ENCODE measurements at regions of chr12 and their contacts with region 1.

Region 1: GRCh38 chr12:94615284-94616181 is 34.8 kb downstream of the TMCC3 start:
- DNase-seq: peak; percentile 93
- H3K4me3 ChIP-seq: peak overlapping the region; percentile 16 to 44 (median 43)
- H3K27ac ChIP-seq: peak overlapping the region; percentile 95
- H3K4me1 ChIP-seq: peaks cover 61% of the 10 kb centered on the region
- H3K27me3 ChIP-seq: no peaks in the 10 kb centered on the region
- CTCF ChIP-seq: no peak

Region 2: GRCh38 chr12:93441617-93442410 is 1173.7 kb before region 1 on chr12 and contains the start of gene UBE2N:
- CTCF ChIA-PET with region 1: no interaction called
- dilution Hi-C with region 1: no loop called
- in situ Hi-C with region 1: no loop called
- intact Hi-C with region 1: loop called (anchors 5 kb)
- DNase-seq: peak; percentile 96
- H3K4me3 ChIP-seq: peak within 1 kb of the TSS; percentile 72 to 97 (median 93)
- H3K27ac ChIP-seq: peak within 1 kb of the TSS; percentile 95
- H3K4me1 ChIP-seq: peaks cover 32% of the 10 kb centered on the region
- H3K27me3 ChIP-seq: no peaks in the 10 kb centered on the region
- CTCF ChIP-seq: no peak
- total RNA-seq, gene UBE2N: 65.5 to 137 TPM

Region 3: DNA sequence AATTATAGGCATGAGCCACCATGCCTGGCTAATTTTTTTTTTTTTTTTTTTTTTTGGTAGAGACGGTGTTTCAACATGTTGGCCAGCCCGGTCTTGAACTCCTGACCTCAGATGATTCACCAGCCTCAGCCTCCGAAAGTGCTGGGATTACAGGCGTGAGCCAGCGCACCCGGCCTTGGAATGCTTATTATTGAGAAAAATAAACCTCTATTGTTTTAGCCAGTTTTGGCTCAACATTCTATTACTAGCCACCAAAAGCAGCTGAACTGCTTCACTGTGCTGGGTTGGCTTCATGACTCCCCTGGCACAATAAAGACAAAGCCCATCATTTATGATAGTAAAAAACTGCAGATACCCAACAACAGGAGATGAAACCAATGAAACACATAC is 62.4 kb before region 1 on chr12:
- CTCF ChIA-PET with region 1: no interaction called
- dilution Hi-C with region 1: loop called (anchors 5 kb)
- in situ Hi-C with region 1: no loop called
- intact Hi-C with region 1: no loop called
- DNase-seq: peak; percentile 95
- H3K4me3 ChIP-seq: no peak overlapping the region
- H3K27ac ChIP-seq: peak overlapping the region; percentile 97
- H3K4me1 ChIP-seq: peaks cover 24% of the 10 kb centered on the region
- H3K27me3 ChIP-seq: no peaks in the 10 kb centered on the region
- CTCF ChIP-seq: no peak

Region 4: GRCh38 chr12:94560431-94561221 is 54.9 kb before region 1 on chr12:
- CTCF ChIA-PET with region 1: no interaction called
- dilution Hi-C with region 1: no loop called
- in situ Hi-C with region 1: no loop called
- intact Hi-C with region 1: loop called (anchors 2 kb)
- DNase-seq: peak; percentile 98
- H3K4me3 ChIP-seq: peak overlapping the region in 2 of 3 experiments; percentile 20 to 35
- H3K27ac ChIP-seq: peak overlapping the region; percentile 95
- H3K4me1 ChIP-seq: peaks cover 34% of the 10 kb centered on the region
- H3K27me3 ChIP-seq: no peaks in the 10 kb centered on the region
- CTCF ChIP-seq: no peak

Region 5: DNA sequence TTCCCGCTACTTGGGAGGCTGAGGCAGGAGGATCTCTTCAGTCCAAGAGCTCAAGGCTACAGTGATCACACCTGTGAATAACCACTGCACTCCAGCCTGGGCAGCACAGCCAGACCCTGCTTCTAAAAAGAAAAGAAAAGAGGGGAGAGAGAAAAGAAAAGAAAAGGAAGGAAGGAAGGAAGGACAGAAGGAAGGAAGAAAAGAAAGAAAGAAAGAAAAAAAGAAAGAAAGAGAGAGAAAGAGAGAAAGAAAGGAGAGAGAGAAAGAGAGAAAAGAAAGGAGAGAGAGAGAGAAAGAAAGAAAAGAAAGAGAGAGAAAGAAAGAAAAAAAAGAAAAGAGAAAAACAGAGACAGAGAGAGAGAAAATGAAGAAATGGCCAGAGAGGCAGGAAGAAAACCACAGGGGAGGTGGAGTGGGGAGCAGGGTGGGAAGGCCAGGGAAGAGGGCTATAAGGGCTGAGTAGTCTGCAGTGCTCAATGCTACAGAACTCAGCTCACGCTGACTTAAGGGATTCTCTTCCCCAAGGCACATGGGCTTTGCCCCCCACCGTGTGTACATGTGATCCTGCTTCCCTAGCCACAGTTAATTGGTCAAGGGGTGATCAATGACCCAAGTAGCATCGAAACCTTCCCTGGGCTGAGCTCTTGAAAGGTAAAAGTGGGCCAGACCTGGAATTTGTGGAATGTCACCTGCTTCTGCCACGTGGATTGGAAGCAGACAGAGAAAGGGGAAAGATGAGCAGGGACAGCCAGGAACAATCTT is 125.2 kb after region 1 on chr12:
- CTCF ChIA-PET with region 1: no interaction called
- dilution Hi-C with region 1: no loop called
- in situ Hi-C with region 1: no loop called
- intact Hi-C with region 1: no loop called
- DNase-seq: no peak
- H3K4me3 ChIP-seq: no peak overlapping the region
- H3K27ac ChIP-seq: no peak overlapping the region
- H3K4me1 ChIP-seq: peaks cover 7% of the 10 kb centered on the region
- H3K27me3 ChIP-seq: no peaks in the 10 kb centered on the region
- CTCF ChIP-seq: no peak

Region 6: DNA sequence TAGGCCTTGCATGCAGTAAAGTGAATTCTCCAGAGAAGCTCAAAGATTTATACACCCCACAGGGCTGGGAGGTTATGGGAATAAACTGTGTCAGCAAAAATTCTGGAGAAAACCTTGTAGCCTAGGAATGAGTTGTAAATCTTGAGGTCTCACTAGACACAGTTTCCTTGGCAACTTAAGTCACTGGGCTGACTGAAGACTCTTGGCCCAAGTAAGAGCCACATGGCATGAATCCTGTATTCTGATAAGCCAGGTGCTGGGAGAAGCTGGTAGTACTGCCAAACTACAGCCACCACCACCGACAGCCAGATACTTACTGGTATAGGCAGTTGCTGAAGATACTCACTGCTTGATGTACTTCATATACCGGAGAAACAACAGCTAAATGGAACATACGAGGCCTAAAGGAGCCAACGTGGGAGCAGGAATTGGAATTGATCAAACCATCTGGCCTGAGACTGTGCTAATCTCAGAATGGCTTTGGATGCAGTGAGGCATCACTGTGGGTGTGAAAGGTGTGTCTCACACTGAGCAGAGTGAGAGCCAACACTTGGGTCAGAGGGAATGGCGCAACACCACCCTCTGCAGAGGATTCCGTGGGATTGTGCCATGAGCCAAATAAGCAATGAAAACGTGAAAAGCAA is 137.6 kb after region 1 on chr12:
- CTCF ChIA-PET with region 1: no interaction called
- dilution Hi-C with region 1: no loop called
- in situ Hi-C with region 1: loop called in 1 of 2 experiments (anchors 10 kb)
- intact Hi-C with region 1: no loop called
- DNase-seq: peak; percentile 70
- H3K4me3 ChIP-seq: no peak overlapping the region
- H3K27ac ChIP-seq: no peak overlapping the region
- H3K4me1 ChIP-seq: no peaks in the 10 kb centered on the region
- H3K27me3 ChIP-seq: no peaks in the 10 kb centered on the region
- CTCF ChIP-seq: peak; percentile 7 to 44

Region 7: DNA sequence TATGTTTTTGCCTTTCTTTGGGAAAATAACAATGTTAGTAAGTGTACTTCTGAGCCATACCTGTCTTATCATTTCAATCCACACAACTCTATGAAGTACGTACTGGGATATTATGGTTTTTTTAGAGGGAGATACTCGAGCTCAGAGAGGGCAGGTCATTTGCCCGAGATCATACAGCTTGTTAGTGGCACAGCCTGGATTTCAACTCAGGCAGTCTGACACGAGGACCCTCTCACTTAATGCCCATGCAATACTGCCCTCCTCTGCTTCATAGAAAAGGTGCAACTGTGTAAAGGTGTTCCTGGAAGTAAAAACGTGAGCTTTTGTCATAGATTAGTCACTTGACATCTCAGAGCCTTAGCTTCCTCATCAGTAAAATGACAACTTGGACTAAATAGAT is 260.0 kb after region 1 on chr12:
- CTCF ChIA-PET with region 1: no interaction called
- dilution Hi-C with region 1: no loop called
- in situ Hi-C with region 1: no loop called
- intact Hi-C with region 1: no loop called
- DNase-seq: peak; percentile 47
- H3K4me3 ChIP-seq: no peak overlapping the region
- H3K27ac ChIP-seq: no peak overlapping the region
- H3K4me1 ChIP-seq: peaks cover 14% of the 10 kb centered on the region
- H3K27me3 ChIP-seq: peaks cover 24% of the 10 kb centered on the region
- CTCF ChIP-seq: peak in 1 of 2 donors; percentile 37